H1 (cell line): ENCODE measurements at regions of chr9 and their contacts with region 1.

Region 1: GRCh38 chr9:127406799-127407509 is 10.0 kb downstream of the SLC2A8 start:
- DNase-seq: no peak
- H3K4me3 ChIP-seq: no peak overlapping the region
- H3K27ac ChIP-seq: no peak overlapping the region
- H3K4me1 ChIP-seq: no peaks in the 10 kb centered on the region
- H3K27me3 ChIP-seq: no peaks in the 10 kb centered on the region
- CTCF ChIP-seq: no peak
- EP300 ChIP-seq: no peak
- POLR2A ChIP-seq: no peak
- RAD21 ChIP-seq: no peak

Region 2: DNA sequence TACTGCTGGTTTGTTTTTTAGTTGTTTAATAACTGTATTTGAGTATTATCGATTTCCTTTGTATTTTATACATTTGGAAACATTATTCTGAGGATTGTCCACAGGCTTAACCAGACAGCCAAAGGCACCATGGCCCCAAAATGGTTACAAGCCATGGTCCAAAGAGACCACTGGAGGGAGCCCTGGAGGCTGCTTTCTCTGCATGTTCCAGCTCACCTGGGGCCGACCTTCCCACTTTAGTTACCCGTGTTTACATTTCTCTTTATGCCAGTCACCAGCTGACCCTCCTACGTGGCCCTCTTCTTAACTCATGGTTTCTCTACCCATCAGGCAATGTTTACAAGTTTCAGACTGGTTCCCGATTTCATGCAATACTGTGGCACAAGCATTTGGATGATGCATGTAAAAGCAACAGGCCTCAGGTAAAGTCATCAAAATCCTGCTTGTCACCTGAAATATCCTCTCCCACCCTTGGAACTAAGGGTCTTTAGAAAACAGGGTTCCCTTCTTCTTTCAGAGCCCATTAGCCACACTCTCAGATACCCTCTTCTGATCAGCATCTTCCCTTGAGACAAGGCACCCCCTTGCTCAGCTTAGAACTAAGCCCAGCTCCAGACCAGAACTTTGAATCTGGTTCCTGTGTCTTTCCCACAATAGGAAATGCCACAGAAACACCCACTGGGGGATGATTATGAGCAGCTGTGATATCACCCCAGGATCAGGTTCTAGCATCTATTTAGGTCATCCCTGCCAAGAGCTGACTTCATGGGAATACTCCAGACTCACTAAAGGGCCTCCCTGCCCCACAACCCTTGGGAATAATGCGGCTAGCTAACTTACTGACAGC is 192.3 kb before region 1 on chr9:
- CTCF ChIA-PET with region 1: interaction called, 10 read pairs
- POLR2A ChIA-PET with region 1: no interaction called
- DNase-seq: peak in 1 of 2 experiments; percentile 75
- H3K4me3 ChIP-seq: no peak overlapping the region
- H3K27ac ChIP-seq: no peak overlapping the region
- H3K4me1 ChIP-seq: peaks cover 2 to 14% (median 9%) of the 10 kb centered on the region in 4 experiments
- H3K27me3 ChIP-seq: no peaks in the 10 kb centered on the region
- CTCF ChIP-seq: peak; percentile 79 to 88 (median 87)
- EP300 ChIP-seq: no peak
- POLR2A ChIP-seq: no peak
- RAD21 ChIP-seq: peak; percentile 82 to 88

Region 3: DNA sequence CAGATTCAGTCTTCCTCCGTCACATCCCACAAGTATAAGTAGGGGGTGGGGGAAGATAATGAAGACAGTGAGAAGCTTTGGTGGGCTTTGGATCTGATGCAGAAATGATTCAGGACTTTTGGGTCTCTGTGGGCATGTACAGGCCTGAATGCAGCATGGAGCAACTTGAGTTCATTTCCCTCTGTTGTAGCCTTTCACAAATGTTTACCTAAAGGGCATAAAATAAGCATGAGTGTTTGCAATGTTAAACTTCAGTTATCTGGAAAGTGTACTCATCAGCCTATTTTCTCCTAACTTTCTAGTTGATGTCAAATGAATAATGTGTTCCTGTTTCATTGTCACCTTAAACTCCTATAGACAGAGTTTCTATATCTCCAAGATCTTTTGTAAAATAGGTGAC is 103.1 kb before region 1 on chr9:
- CTCF ChIA-PET with region 1: no interaction called
- POLR2A ChIA-PET with region 1: no interaction called
- DNase-seq: no peak
- H3K4me3 ChIP-seq: no peak overlapping the region
- H3K27ac ChIP-seq: no peak overlapping the region
- H3K4me1 ChIP-seq: no peaks in the 10 kb centered on the region
- H3K27me3 ChIP-seq: no peaks in the 10 kb centered on the region
- CTCF ChIP-seq: no peak
- EP300 ChIP-seq: no peak
- POLR2A ChIP-seq: no peak
- RAD21 ChIP-seq: no peak

Region 4: DNA sequence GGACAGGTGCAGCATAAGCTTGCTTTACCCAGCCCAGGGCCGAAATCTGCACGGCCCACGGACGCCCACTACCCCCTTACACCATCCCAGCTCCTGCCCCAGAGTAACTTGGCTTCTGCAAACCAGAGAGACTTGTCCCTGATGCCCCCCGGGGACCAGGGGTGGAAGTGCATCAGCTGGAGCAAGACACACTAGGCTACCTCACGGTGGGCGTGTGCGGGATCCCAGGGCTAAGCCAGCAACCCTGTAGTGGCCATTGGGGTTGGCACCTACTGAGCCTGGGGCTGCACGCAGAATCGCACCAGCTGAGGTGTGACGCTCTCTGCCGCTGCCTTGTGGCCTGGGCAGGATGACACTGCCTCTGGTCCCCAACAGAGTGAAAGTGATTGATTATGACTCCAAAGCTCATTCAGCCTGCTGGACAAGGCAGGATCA is 11.1 kb after region 1 on chr9:
- CTCF ChIA-PET with region 1: interaction called, 10 read pairs
- POLR2A ChIA-PET with region 1: interaction called, 6 read pairs
- DNase-seq: peak; percentile 43 to 83
- H3K4me3 ChIP-seq: no peak overlapping the region
- H3K27ac ChIP-seq: no peak overlapping the region
- H3K4me1 ChIP-seq: peaks cover 0 to 8% (median 5%) of the 10 kb centered on the region in 4 experiments; a peak in 6 of 7 replicates
- H3K27me3 ChIP-seq: no peaks in the 10 kb centered on the region
- CTCF ChIP-seq: peak; percentile 65 to 76 (median 70)
- EP300 ChIP-seq: no peak
- POLR2A ChIP-seq: no peak
- RAD21 ChIP-seq: peak; percentile 63 to 70

Region 5: DNA sequence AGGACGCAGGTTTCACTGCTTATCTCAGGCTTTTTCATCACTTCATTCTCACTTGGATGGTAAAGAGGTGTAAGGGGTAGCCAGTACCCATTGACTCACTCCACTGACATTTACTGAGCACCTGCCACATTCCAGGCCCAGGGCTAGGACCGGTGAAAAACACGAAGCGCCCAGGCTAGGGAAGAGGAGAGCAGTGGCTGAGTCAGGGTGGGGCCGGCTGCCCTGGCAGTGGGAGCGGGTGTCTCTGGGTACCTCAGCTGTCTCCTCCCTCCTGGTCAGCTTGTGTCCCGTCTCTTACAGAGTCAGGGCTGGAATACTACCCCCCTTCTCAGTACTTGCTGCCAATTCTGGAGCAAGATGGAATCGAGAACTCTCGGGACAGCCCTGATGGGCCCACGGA is 66.5 kb after region 1 on chr9:
- CTCF ChIA-PET with region 1: no interaction called
- POLR2A ChIA-PET with region 1: no interaction called
- DNase-seq: no peak
- H3K4me3 ChIP-seq: no peak overlapping the region
- H3K27ac ChIP-seq: no peak overlapping the region
- H3K4me1 ChIP-seq: peaks cover 0 to 3% (median 0%) of the 10 kb centered on the region in 4 experiments; a peak in 1 of 7 replicates
- H3K27me3 ChIP-seq: no peaks in the 10 kb centered on the region
- CTCF ChIP-seq: no peak
- EP300 ChIP-seq: no peak
- POLR2A ChIP-seq: no peak
- RAD21 ChIP-seq: no peak